ENCODE measurements at regions of chr21 and their contacts with region 1.

Region 1: DNA sequence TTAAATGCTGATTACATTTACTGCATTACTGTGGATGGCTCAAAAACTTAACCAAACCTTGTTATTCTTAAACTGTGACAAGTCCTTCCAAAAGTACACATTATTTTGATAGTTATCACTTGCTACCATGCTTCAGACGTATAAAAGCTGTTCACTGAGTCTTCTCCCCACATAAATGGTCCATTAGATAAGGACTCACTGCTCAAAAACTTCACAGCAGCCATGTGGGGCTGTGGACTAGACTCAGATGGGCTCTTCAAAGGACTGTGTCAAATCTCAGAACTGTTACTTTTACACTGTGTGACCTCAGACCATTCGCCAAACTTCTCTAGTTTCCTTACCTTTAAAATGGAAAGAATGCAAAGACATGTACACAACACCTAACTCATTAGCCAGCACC is 11.6 kb downstream of the SCAF4 start:
- DNase-seq: no peak
- ATAC-seq: no peak
- H3K4me3 Mint-ChIP-seq: no peak overlapping the region
- H3K27ac Mint-ChIP-seq: no peak overlapping the region
- H3K4me1 Mint-ChIP-seq: peaks cover 90% of the 10 kb centered on the region
- H3K27me3 Mint-ChIP-seq: no peaks in the 10 kb centered on the region
- CTCF ChIP-seq: no peak

Region 2: GRCh38 chr21:31707499-31707898 is 12.8 kb before region 1 on chr21:
- CTCF ChIA-PET with region 1: no interaction called
- POLR2A ChIA-PET with region 1: interaction called, 5 read pairs
- intact Hi-C with region 1: loop called (anchors 1 kb)
- DNase-seq: no peak
- ATAC-seq: no peak
- H3K4me3 Mint-ChIP-seq: no peak overlapping the region
- H3K27ac Mint-ChIP-seq: no peak overlapping the region
- H3K4me1 Mint-ChIP-seq: peaks cover 60% of the 10 kb centered on the region
- H3K27me3 Mint-ChIP-seq: no peaks in the 10 kb centered on the region
- CTCF ChIP-seq: no peak

Region 3: DNA sequence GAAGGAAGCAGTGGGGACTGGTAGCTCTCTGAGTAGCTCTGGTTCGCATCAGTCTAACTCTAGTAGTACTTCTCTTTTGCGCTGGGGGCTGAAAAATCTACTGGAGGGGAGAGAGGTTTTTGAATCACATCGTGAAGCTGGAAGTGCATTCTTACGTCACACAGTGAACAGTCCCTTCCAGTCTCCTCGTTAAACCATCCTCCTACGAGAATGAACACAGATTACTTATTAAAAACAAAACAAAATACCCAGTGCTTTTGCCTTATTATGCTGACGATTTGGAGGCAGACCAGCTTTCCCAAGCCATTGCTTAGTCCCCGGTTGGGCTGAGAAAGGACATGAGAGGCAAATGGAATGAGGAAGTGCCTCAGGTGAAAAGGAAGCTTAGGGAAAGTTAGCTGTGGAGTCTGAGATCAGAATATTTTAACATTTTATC is 168.6 kb after region 1 on chr21:
- CTCF ChIA-PET with region 1: no interaction called
- POLR2A ChIA-PET with region 1: no interaction called
- intact Hi-C with region 1: no loop called
- DNase-seq: no peak
- ATAC-seq: no peak
- H3K4me3 Mint-ChIP-seq: no peak overlapping the region
- H3K27ac Mint-ChIP-seq: no peak overlapping the region
- H3K4me1 Mint-ChIP-seq: no peaks in the 10 kb centered on the region
- H3K27me3 Mint-ChIP-seq: peaks cover 23% of the 10 kb centered on the region
- CTCF ChIP-seq: no peak